ENCODE measurements at regions of chr1 and their contacts with region 1.

Region 1: GRCh38 chr1:13960375-13960987 is 260.5 kb downstream of the PRDM2 start:
- DNase-seq: peak; percentile 59 to 86 (median 75)
- ATAC-seq: peak; percentile 57 to 76
- H3K4me3 ChIP-seq: no peak overlapping the region
- H3K27ac ChIP-seq: no peak overlapping the region
- H3K4me1 ChIP-seq: no peaks in the 10 kb centered on the region
- H3K27me3 ChIP-seq: no peaks in the 10 kb centered on the region

Region 2: DNA sequence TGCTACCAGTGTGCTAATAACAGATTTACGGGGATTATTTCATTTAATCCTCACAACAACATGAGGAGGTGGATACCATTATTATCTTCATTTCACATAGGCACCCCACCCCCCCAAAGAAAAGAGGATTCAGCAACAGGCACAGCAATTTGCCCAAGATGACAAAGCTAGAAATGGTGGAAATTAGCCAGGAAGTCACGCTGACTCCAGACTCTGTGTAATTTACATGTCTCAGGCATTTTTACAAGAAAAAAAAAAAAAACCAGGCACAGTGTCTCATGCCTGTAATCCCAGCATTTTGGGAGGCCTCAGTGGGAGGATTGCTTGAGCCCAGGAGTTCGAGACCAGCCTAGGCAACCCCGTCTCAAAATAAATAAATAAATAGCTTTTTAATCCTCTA is 298.0 kb before region 1 on chr1:
- intact Hi-C with region 1: loop called (anchors 2 to 5 kb)
- DNase-seq: no peak
- ATAC-seq: peak in 1 of 2 donors; percentile 31
- H3K4me3 ChIP-seq: no peak overlapping the region
- H3K27ac ChIP-seq: no peak overlapping the region
- H3K4me1 ChIP-seq: no peaks in the 10 kb centered on the region
- H3K27me3 ChIP-seq: no peaks in the 10 kb centered on the region

Region 3: DNA sequence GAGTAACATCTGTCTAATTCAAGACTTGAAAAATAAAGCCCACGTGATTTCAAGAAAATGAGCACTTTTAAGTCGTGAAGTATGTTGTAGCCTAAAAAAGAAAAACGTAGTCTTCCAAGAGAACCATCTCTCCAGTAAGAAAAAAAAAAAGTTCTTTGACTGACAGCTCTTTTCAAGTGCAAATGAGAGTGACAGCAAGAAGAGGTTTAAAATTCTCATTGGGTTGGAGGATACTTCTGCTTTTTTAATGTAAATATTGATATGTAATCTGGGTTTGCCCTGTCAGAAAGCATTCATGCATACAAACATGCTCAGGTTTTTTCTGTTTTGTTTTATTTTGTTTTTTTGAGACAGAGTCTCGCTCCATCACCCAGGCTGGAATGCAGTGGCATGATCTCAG is 292.8 kb before region 1 on chr1:
- intact Hi-C with region 1: loop called (anchors 2 to 5 kb)
- DNase-seq: no peak
- ATAC-seq: no peak
- H3K4me3 ChIP-seq: no peak overlapping the region
- H3K27ac ChIP-seq: no peak overlapping the region
- H3K4me1 ChIP-seq: no peaks in the 10 kb centered on the region
- H3K27me3 ChIP-seq: no peaks in the 10 kb centered on the region

Region 4: DNA sequence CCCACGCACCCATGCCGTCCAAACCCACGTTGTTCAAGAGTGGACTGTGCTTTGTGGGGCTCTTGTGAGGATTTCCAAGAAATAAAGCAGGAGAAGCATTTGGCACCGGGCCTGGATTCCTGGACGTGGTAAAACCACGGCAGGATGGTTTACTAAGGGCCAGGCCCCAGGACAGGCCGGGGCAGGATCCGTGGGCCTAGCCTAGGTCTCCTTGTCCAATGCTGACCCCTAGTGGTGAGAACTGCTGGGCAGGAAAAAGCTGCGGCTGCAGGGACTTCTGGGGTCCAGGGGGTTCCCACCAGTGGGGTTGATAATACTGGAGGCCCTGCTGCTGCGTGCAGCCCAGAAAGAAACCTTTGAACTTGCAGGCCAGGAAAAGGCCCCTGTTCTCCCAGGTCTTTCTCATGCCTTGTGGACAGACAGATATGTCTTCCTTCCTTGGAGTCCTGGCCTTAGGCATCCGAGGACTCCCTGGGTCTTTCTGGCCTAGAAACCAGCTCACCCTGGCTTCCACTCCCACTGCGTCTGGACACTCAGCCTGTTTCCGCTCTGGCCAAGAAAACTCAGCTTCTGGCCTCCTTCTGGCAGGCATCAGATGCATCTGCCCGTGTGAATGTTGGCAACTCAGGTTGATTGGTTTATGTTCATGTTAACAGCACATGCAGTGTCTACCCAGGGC is 1086.1 kb after region 1 on chr1:
- intact Hi-C with region 1: loop called in 2 of 4 experiments (anchors 5 to 10 kb)
- DNase-seq: peak; percentile 74 to 86 (median 82)
- ATAC-seq: peak; percentile 63 to 77
- H3K4me3 ChIP-seq: no peak overlapping the region
- H3K27ac ChIP-seq: no peak overlapping the region
- H3K4me1 ChIP-seq: no peaks in the 10 kb centered on the region
- H3K27me3 ChIP-seq: no peaks in the 10 kb centered on the region

Measured in right cardiac atrium (tissue), 5 donors.